HAP-1 (cell line): ENCODE measurements at regions of chr2 and their contacts with region 1.

Region 1: DNA sequence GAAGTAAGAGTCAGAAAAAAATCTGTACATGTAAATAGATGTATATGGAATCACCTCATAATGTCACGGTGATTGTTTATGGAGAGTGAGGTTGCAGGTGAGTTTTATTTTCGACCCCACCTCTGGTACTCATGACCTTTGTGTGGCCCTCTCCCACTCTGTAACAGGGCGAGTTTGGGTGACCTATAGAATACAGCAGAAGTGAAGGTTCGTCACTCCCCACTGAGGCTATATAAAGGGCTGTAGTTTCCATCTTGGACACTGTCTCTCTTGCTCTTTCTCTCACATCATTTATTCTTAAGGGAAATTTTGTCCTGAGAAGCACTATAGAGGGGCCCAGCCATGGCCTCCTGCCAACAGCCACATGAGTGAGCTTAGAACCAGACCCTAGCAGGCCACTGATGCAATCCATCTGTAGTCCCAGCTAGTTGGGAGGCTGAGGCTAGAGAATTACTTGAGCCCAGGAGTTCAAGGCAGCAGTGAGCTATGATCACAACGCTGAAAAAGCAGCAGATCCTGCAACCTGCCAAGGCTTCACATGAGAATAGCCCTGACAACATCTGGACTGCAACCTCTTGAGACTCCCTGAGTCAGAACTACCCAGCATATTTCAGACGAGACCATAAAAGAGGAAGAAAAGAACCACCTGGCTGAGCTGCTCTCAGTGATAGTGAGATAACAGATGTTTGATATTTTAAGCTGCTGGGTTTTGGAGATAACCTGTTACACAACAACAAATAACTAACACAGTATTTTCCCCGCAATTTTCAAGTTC is 74.3 kb upstream of the SLC1A4 start:
- DNase-seq: peak in 1 of 2 experiments; percentile 25
- H3K4me3 ChIP-seq: no peak overlapping the region
- H3K4me1 ChIP-seq: peaks cover 14% of the 10 kb centered on the region
- H3K27me3 ChIP-seq: no peaks in the 10 kb centered on the region

Region 2: GRCh38 chr2:64586883-64587481 is 327.9 kb before region 1 on chr2:
- in situ Hi-C with region 1: no loop called
- DNase-seq: peak in 1 of 2 experiments; percentile 77
- H3K4me3 ChIP-seq: no peak overlapping the region
- H3K4me1 ChIP-seq: no peaks in the 10 kb centered on the region
- H3K27me3 ChIP-seq: no peaks in the 10 kb centered on the region

Region 3: DNA sequence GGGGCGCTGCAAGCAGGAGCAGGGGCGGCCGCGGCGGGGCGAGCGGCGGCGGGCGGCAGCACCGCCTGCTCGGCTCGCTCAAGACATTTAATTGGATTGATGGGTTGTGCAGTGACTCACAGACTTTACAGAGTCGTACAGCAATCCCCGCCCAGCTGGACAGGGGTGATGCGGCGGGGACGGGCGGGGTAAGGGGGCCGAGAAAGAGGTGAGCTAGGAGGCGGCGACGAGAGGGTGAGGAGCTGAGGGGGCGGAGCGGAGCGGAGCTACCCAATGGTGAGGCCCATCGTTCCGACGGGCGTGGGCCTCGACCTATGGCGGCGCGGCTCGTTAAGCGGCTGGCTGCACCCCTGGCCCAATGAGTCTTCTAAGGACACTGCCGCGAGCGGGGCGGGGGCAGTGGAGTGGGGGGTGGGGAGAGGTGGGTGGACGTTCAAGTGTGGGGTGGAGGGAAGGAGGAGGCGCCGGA is 164.1 kb before region 1 on chr2:
- in situ Hi-C with region 1: no loop called
- DNase-seq: peak; percentile 99
- H3K4me3 ChIP-seq: peak overlapping the region; percentile 66
- H3K4me1 ChIP-seq: peaks cover 14% of the 10 kb centered on the region
- H3K27me3 ChIP-seq: no peaks in the 10 kb centered on the region

Region 4: DNA sequence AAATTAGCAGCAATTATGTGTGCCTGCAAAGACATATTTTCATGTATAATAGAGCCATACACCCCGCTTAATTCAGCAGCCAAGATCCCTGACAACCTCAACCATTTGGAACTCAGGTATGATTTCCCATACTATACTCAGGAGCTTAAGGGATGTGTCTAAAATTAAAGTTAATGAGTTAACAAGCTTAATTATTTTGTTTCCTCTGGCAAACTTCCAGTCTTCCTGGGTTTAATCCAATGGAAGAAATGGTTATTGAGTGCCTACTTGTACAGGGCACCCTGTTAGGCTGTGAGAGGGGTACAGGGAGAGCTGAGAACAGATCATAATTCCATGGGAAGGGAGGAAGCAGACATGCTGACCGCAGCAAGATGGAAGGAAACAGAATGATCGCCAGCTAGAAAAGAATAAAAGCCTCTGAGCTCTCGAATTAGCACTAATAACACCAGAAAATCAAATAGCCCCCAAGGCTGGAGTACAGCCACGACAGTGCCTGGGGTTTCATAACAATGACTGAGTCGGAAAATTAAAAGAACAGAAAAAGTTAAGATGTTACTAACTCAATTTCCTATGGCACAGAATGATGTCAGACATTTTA is 120.5 kb after region 1 on chr2:
- in situ Hi-C with region 1: loop called (anchors 5 kb)
- DNase-seq: no peak
- H3K4me3 ChIP-seq: no peak overlapping the region
- H3K4me1 ChIP-seq: peaks cover 12% of the 10 kb centered on the region
- H3K27me3 ChIP-seq: no peaks in the 10 kb centered on the region

Region 5: GRCh38 chr2:65186872-65187851 is 272.2 kb after region 1 on chr2:
- in situ Hi-C with region 1: loop called (anchors 25 kb)
- DNase-seq: peak; percentile 80 to 83
- H3K4me3 ChIP-seq: no peak overlapping the region
- H3K4me1 ChIP-seq: no peaks in the 10 kb centered on the region
- H3K27me3 ChIP-seq: peaks cover 2% of the 10 kb centered on the region

Region 6: DNA sequence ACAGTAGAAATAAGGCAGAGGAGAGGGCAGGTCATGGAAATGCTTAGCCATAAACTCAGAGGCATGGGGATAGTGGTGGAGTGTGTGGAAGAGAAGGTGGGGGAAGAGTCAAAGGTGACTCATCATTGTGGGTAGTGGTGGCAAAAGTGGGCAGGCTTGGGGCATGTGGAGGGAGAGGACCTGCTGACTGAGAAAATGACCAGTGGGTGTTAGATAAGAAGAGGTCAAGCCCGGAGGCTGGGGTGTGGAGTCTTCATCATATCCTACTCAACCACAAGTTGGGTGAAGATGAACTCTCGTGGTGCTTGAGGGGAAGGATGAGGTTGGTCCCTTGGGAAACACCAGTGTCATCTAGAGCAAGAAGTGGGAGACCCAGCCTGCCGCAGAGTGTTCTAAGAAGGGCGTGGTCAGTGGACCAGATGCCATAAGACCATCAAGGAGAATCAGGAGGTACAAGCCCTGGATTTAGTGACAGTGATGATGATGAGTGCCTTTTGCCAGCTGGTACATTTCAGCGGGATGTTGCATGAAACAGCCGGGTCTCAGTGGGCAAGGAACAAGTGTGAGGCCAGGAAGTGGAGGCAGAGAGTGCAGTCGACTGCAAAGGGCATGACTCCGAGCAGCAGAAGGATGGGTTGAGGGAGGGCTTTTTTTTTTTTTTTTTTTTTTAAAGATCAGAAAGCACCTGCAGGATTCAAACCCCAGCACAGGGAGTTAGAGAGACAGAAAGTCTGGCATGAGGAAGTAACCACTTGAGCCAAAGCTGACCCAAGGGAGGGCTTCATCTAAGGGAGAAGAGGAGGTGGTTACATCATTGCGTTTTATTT is 640.1 kb after region 1 on chr2:
- in situ Hi-C with region 1: loop called (anchors 25 kb)
- DNase-seq: no peak
- H3K4me3 ChIP-seq: no peak overlapping the region
- H3K4me1 ChIP-seq: peaks cover 17% of the 10 kb centered on the region
- H3K27me3 ChIP-seq: no peaks in the 10 kb centered on the region